Activated CD4-positive, alpha-beta T cell treated with anti-CD3 and anti-CD28 coated beads for 36 hours (primary cell): ENCODE measurements at regions of chr3 and their contacts with region 1.

Region 1: DNA sequence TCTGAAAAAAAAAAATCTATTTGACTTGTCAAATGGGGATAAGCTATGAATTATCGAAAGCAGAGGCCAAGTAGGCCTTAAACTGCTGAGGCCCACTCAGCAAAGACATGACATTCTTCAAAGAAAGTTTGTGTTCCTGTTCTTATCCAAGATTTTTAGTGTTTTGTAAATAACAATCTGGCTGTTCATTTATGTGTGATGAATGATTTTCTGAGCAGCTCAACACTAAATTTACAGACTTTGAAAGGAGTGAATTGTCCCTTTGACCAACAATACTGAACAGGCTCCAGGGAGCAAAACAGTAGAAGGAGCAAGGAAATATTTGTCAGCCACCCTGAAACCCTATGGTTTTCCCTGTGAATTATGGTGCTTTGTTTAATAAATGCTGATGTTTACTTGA is 512.6 kb upstream of the NAALADL2 start:
- DNase-seq: no peak
- ATAC-seq: no peak
- H3K4me3 Mint-ChIP-seq: no peak overlapping the region
- H3K27ac Mint-ChIP-seq: no peak overlapping the region
- H3K4me1 Mint-ChIP-seq: no peaks in the 10 kb centered on the region
- H3K27me3 Mint-ChIP-seq: no peaks in the 10 kb centered on the region

Region 2: GRCh38 chr3:174376346-174376745 is 29.8 kb after region 1 on chr3:
- CTCF ChIA-PET with region 1: no interaction called
- POLR2A ChIA-PET with region 1: no interaction called
- intact Hi-C with region 1: loop called in 1 of 2 experiments (anchors 1 kb)
- DNase-seq: no peak
- ATAC-seq: no peak
- H3K4me3 Mint-ChIP-seq: no peak overlapping the region
- H3K27ac Mint-ChIP-seq: no peak overlapping the region
- H3K4me1 Mint-ChIP-seq: no peaks in the 10 kb centered on the region
- H3K27me3 Mint-ChIP-seq: no peaks in the 10 kb centered on the region